Left colon (tissue), 2 donors: ENCODE measurements at regions of chr5 and their contacts with region 1.

Region 1: DNA sequence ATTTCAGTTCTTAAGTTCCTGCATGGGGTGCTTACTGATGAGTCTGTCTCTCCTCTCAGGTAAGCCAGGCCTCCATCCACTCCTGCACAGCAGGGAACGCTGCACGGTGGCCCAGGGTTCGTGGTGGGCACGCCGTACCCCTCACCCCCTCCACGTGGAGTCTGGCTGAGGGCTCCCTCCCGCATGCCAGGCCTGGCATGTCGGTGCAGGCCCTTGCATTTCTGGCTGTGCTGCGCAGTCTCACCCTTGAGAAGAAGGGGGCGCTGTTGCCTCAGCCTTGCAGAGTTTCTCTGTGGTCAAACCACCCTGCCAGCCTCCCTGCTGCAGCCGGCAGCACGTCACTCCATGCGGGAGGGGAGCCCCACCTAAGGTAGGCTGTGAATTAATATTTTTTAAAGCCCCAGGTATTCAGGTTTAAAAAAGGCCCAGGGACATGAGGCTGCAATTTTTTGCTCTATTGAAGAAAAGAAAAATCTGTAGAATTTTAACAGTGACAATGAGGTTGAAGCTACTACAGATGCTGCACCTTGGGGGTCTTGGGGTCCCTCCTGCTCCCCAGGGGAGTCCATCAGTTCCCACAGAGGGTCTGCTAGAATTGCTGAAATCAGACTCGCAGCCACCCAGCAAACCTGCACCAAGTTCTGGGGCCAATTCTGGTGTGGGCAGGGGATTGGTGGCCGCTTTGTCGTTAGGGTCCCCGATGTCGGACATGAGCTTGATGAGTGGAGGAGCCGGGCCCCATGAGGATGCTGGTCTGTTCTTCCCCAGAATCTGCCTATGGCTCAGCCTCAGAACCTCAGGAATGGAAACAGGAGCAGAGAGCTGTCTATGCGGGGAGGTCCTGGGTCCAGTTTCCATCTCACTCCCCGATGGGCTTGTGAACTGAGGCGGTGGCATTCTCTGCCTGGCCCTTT is 52.6 kb downstream of the TENT4A start:
- DNase-seq: peak; percentile 74 to 86
- ATAC-seq: peak; percentile 83

Region 2: GRCh38 chr5:6926491-6927038 is 160.7 kb after region 1 on chr5:
- intact Hi-C with region 1: no loop called
- DNase-seq: no peak
- ATAC-seq: no peak

Region 3: DNA sequence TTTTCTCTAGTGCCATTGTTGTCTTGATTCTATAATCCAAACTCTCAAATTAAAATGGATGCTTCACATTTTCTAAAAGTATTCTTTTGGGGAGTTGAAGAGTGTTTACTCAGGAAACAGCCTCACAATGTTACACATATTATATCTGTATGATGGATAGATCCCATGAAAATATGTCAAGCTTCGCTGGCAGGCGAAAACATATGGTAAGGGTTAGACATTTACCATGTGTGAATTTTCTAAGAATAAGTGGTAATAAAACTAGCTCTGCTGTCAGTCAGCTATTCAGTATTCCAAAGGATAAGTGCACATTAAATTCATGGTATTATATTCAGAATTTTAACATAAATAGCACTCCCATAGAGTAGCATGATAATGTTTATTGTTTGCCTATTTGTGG is 616.7 kb after region 1 on chr5:
- intact Hi-C with region 1: loop called in 1 of 2 experiments (anchors 10 kb)
- DNase-seq: no peak
- ATAC-seq: no peak